Activated CD4-positive, alpha-beta memory T cell treated with anti-CD3 and anti-CD28 coated beads for 36 hours (primary cell): ENCODE measurements at regions of chr3 and their contacts with region 1.

Region 1: GRCh38 chr3:15377961-15378791 is 45.8 kb upstream of the SH3BP5 start:
- DNase-seq: peak; percentile 97
- H3K4me3 Mint-ChIP-seq: peak overlapping the region; percentile 20
- H3K27ac Mint-ChIP-seq: peak overlapping the region; percentile 79
- H3K4me1 Mint-ChIP-seq: peaks cover 18% of the 10 kb centered on the region
- H3K27me3 Mint-ChIP-seq: no peaks in the 10 kb centered on the region

Region 2: GRCh38 chr3:15291589-15292541 is 86.3 kb before region 1 on chr3:
- CTCF ChIA-PET with region 1: no interaction called
- POLR2A ChIA-PET with region 1: no interaction called
- intact Hi-C with region 1: loop called (anchors 1 kb)
- DNase-seq: peak; percentile 83
- H3K4me3 Mint-ChIP-seq: peak overlapping the region; percentile 42
- H3K27ac Mint-ChIP-seq: peak overlapping the region; percentile 87
- H3K4me1 Mint-ChIP-seq: peaks cover 77% of the 10 kb centered on the region
- H3K27me3 Mint-ChIP-seq: no peaks in the 10 kb centered on the region

Region 3: GRCh38 chr3:15309662-15310335 is 68.4 kb before region 1 on chr3:
- CTCF ChIA-PET with region 1: interaction called, 4 read pairs
- POLR2A ChIA-PET with region 1: no interaction called
- intact Hi-C with region 1: loop called (anchors 1 kb)
- DNase-seq: peak; percentile 82
- H3K4me3 Mint-ChIP-seq: peak overlapping the region; percentile 61
- H3K27ac Mint-ChIP-seq: peak overlapping the region; percentile 98
- H3K4me1 Mint-ChIP-seq: peaks cover 78% of the 10 kb centered on the region
- H3K27me3 Mint-ChIP-seq: no peaks in the 10 kb centered on the region

Region 4: GRCh38 chr3:15361494-15362212 is 16.5 kb before region 1 on chr3:
- CTCF ChIA-PET with region 1: interaction called, 11 read pairs
- POLR2A ChIA-PET with region 1: interaction called, 3 read pairs
- intact Hi-C with region 1: loop called (anchors 1 kb)
- DNase-seq: peak; percentile 85
- H3K4me3 Mint-ChIP-seq: peak overlapping the region; percentile 48
- H3K27ac Mint-ChIP-seq: peak overlapping the region; percentile 85
- H3K4me1 Mint-ChIP-seq: peaks cover 54% of the 10 kb centered on the region
- H3K27me3 Mint-ChIP-seq: no peaks in the 10 kb centered on the region

Region 5: DNA sequence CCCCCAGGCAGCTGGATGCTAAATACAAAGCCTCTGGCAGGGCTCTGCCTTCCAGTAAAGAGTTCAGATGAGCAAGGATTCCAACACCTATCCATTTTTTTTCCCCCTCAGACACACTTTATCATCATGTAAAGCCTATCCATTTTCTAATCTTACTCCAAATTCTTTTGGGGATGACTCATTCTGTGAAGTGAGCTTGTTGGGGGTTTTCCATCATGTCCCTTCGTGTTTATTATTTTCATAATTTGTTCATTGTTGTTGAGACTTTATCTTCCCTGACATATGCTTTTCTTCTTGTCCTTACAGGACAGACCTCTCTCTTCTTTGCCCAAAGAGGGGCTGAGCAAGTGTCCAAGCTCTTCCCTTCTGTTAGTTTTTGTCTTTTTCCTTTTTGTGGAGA is 11.1 kb before region 1 on chr3:
- CTCF ChIA-PET with region 1: interaction called, 11 read pairs
- POLR2A ChIA-PET with region 1: no interaction called
- intact Hi-C with region 1: no loop called
- DNase-seq: no peak
- H3K4me3 Mint-ChIP-seq: no peak overlapping the region
- H3K27ac Mint-ChIP-seq: peak overlapping the region; percentile 39
- H3K4me1 Mint-ChIP-seq: peaks cover 30% of the 10 kb centered on the region
- H3K27me3 Mint-ChIP-seq: no peaks in the 10 kb centered on the region

Region 6: GRCh38 chr3:15557511-15557946 is 179.4 kb after region 1 on chr3:
- CTCF ChIA-PET with region 1: interaction called, 3 read pairs
- POLR2A ChIA-PET with region 1: no interaction called
- intact Hi-C with region 1: loop called (anchors 1 kb)
- DNase-seq: peak; percentile 75
- H3K4me3 Mint-ChIP-seq: no peak overlapping the region
- H3K27ac Mint-ChIP-seq: no peak overlapping the region
- H3K4me1 Mint-ChIP-seq: peaks cover 21% of the 10 kb centered on the region
- H3K27me3 Mint-ChIP-seq: no peaks in the 10 kb centered on the region